ENCODE measurements at regions of chr10 and their contacts with region 1.

Region 1: DNA sequence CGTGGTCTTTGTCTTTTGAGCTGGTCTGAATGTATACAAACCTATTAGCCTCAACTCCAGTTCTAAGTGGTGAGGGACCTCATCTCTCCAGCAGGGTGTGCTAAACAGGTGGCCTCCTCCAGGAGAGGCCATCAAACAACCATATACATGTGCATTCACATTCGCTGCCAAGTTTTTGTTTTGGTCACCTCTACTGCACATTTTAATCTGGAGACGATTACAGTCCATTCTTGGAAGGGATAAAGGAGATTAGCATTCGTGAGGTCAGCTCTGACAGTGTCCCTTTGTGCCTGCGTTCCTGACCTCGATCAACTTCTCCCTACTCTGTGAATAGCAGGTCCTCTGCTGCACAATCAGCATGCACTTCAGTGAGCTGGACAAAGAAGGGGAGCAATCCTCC is 60.8 kb downstream of the RHOBTB1 start:
- H3K4me3 ChIP-seq: no peak overlapping the region
- H3K27ac ChIP-seq: no peak overlapping the region
- H3K4me1 ChIP-seq: no peaks in the 10 kb centered on the region
- CTCF ChIP-seq: peak; percentile 26; the same call in 1 of the 2 replicates

Region 2: DNA sequence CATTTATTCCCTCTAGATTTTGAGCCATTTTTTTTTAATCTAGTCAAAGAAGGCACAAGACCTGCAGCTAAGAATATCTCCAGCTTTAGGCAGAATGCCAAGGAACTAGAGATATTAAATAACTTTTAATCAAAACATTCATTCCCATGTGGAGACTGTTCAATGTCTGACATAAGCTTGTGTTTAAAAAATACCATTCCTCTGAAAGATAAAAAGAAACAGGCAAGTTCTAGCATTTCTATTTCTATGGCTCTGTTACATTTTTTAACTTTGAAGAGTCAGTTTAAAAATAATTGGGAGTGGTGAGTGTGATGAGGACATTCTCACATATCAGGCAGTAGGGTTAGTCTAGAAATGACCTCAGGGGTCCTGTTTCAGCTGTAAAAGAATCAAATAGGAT is 12.8 kb after region 1 on chr10:
- CTCF ChIA-PET with region 1: interaction called, 16 read pairs
- POLR2A ChIA-PET with region 1: no interaction called
- H3K4me3 ChIP-seq: no peak overlapping the region
- H3K27ac ChIP-seq: no peak overlapping the region
- H3K4me1 ChIP-seq: peaks cover 20% of the 10 kb centered on the region
- CTCF ChIP-seq: no peak